ENCODE measurements at regions of chr12 and their contacts with region 1.

Region 1: DNA sequence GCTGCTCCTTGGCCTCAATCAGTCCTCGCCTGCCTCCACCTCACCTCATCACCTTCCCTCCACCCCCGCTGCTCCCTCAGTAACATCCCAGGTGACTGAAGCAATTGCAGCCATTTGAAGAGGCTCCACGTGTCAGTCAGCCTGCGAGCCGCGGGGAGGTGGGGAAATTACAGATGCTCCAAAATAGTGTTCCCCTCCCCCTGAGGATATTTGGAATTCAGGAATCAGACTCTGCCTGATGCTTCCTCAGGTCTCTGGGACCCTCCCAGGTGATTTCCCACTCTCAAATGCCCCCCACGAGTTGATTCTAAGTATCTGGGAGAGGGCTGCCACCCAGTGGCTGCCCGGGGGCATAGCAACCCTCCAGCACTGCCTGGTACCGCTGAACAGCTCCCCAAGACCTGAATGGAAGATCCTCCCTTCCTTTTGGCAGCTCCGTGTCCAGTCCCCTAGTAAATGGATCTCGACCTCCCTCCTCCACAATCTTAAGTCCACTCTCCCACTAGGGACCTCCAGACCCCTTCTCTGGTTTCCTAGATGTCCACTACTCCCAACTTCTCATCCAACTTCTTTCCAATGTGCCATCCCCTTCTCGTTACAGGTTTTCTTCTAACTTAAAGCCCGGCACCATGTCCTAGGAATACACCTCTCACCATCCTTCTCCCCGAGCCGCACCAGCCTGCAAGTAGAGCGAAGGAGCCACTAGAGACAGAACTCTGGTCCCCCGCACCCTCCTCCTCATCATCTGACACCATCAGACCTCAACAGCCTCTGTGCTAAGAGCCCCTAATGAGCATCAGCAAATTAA is 1.4 kb upstream of the ASIC1 start:
- DNase-seq: no peak
- H3K4me3 ChIP-seq: peak overlapping the region; percentile 15
- H3K27ac ChIP-seq: no peak overlapping the region
- H3K4me1 ChIP-seq: peaks cover 25% of the 10 kb centered on the region
- H3K27me3 ChIP-seq: peaks cover 73% of the 10 kb centered on the region
- CTCF ChIP-seq: peak; percentile 95

Region 2: DNA sequence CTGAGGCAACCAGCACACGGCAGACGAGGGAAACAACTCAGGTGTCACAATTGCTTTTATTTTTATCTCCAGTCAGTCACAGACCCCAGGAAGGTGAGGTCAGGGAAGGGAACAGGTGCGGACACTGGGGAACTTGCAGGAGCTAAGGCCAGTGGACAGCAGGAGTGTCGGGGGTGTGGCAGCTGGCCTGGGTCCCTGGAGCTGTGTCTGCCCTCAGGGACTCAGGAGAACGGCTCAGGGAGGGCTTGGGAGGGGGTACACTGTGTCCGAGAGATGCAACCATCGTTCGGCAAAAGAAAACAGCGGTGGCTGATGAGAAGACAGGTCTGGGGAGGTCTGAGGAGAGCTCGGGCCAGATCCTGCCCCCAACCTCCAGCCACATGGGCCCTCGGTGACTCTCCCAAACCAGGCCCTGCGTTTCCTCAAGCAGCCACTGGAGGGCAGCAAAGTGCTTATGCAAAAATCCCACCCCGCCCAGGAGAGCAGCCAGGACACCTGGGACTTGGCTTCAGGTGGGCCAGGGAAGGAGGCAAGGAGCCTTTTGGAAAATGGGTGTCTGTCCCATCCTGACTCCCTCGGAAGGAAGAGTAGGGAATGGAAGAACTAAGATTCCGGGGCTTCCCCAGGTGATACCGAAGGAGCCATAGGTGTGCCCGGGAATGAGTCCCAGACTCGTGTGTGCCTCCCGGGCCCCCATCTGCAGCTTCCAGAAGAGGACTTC is 189.0 kb before region 1 on chr12:
- intact Hi-C with region 1: loop called (anchors 10 kb)
- DNase-seq: peak; percentile 74
- H3K4me3 ChIP-seq: no peak overlapping the region
- H3K27ac ChIP-seq: peak overlapping the region; percentile 82
- H3K4me1 ChIP-seq: peaks cover 39% of the 10 kb centered on the region
- H3K27me3 ChIP-seq: peaks cover 20% of the 10 kb centered on the region
- CTCF ChIP-seq: peak; percentile 98

Region 3: GRCh38 chr12:49967042-49967776 is 88.8 kb before region 1 on chr12:
- intact Hi-C with region 1: loop called (anchors 5 kb)
- DNase-seq: peak; percentile 89
- H3K4me3 ChIP-seq: peak overlapping the region; percentile 60
- H3K27ac ChIP-seq: no peak overlapping the region
- H3K4me1 ChIP-seq: peaks cover 25% of the 10 kb centered on the region
- H3K27me3 ChIP-seq: peaks cover 54% of the 10 kb centered on the region
- CTCF ChIP-seq: peak; percentile 79

Region 4: DNA sequence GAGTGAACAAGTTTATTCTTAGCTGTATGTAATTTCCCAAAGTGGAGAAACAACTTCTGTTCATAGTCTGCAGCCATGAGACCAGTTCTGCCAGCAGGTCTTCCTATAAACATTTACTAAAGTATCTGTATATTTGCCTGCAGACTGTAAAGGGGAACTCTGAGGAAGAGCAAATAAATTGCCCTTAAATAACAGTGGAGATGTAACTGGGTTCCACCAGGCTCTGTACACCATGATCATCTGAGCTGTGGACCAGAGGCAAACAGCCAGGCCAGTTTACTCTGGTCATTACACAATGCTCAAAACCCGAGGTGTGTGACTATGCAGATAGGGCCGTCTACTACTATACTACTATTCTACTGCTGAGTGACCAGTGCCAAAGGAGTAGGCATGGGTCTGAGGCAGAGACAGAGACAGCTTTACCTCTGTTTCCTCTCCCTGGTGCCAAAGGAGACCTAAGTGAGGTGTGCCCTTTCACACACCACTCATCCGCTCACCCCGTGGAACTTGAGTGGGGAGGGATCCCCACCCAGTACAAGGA is 132.3 kb after region 1 on chr12:
- intact Hi-C with region 1: no loop called
- DNase-seq: no peak
- H3K4me3 ChIP-seq: no peak overlapping the region
- H3K27ac ChIP-seq: no peak overlapping the region
- H3K4me1 ChIP-seq: peaks cover 43% of the 10 kb centered on the region
- H3K27me3 ChIP-seq: no peaks in the 10 kb centered on the region
- CTCF ChIP-seq: no peak